Ovary (tissue), 10 donors: ENCODE measurements at regions of chr12 and their contacts with region 1.

Region 1: DNA sequence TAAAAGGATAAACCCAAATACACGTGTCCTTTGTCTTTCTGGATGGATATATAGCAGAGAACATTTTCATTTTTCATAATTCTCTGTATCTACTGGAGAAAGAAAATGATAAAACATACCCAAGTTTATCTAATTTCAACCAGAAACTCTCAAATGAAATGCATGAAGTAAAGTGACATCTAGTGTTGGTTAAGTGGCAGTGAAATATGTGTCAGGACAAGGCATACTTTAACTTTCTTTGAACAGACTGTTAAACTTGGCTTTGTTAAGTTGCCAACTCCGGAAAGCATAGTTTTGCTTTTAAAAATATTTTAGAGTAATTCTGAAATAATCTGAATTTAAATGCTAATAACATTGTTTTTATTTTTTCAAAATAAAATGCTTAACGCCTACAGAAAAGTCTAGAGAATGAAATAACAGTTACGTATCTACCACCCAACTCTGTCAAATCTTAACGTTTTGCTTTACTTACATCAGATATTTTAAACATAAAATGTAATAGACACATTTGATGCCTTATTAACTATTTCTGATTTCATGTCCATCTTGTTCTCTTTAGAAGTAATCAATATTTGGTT is 25.2 kb upstream of the NTN4 start:
- DNase-seq: no peak
- H3K4me3 ChIP-seq: no peak overlapping the region
- H3K27ac ChIP-seq: no peak overlapping the region
- H3K4me1 ChIP-seq: no peaks in the 10 kb centered on the region
- H3K27me3 ChIP-seq: no peaks in the 10 kb centered on the region
- CTCF ChIP-seq: peak; percentile 54 to 88 (median 70)
- EP300 ChIP-seq: no peak
- POLR2A ChIP-seq: no peak

Region 2: DNA sequence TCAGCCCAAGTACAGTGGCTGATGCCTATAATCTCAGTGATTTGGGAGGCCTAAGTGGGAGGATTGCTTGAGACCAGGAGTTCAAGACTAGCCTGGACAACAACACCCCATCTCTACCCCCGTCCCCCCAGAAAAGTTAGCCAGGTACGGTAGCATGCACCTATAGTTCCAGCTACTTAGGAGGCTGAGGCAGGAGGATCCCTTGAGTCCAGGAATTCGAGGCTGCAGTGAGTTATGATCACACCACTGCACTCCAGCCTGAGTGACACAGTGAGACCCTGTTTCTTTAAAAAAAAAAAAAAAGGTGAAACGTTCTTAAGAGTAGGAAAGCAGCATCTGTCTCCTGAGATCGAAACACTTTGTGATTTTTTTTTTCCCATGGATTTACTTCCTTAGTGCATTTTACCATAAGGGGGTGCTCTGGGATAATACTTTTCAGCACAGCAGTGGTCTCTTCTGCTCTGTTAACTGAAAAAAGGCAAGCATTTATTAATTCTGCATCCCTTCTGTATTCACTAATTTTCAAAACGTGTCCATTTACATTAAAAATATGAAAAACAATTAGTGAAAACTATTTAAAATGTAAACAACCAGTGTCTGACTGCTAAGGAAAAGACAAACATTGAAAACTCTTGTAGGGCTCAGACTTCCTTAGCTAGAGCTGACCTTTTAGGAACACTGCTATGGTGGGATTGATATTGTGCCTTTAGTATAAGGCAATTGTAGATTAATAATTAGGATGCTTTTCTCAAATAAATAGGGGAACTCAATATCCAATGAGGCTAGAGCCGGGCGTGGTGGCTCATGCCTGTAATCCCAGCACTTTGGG is 233.3 kb before region 1 on chr12:
- intact Hi-C with region 1: loop called in 3 of 4 experiments (anchors 2 to 5 kb)
- DNase-seq: no peak
- H3K4me3 ChIP-seq: no peak overlapping the region
- H3K27ac ChIP-seq: no peak overlapping the region
- H3K4me1 ChIP-seq: no peaks in the 10 kb centered on the region
- H3K27me3 ChIP-seq: no peaks in the 10 kb centered on the region
- CTCF ChIP-seq: peak; percentile 34 to 65 (median 56)
- EP300 ChIP-seq: no peak
- POLR2A ChIP-seq: no peak

Region 3: GRCh38 chr12:95623585-95624042 is 192.1 kb before region 1 on chr12:
- intact Hi-C with region 1: loop called in 2 of 4 experiments (anchors 5 to 10 kb)
- DNase-seq: peak; percentile 62 to 81 (median 74)
- H3K4me3 ChIP-seq: no peak overlapping the region
- H3K27ac ChIP-seq: no peak overlapping the region
- H3K4me1 ChIP-seq: peaks cover 1% of the 10 kb centered on the region
- H3K27me3 ChIP-seq: no peaks in the 10 kb centered on the region
- CTCF ChIP-seq: peak; percentile 22 to 58 (median 41)
- EP300 ChIP-seq: no peak
- POLR2A ChIP-seq: no peak

Region 4: GRCh38 chr12:95700316-95700785 is 115.4 kb before region 1 on chr12:
- intact Hi-C with region 1: no loop called
- DNase-seq: no peak
- H3K4me3 ChIP-seq: no peak overlapping the region
- H3K27ac ChIP-seq: no peak overlapping the region
- H3K4me1 ChIP-seq: peaks cover 2% of the 10 kb centered on the region
- H3K27me3 ChIP-seq: no peaks in the 10 kb centered on the region
- CTCF ChIP-seq: no peak
- EP300 ChIP-seq: no peak
- POLR2A ChIP-seq: no peak

Region 5: GRCh38 chr12:95763809-95764253 is 51.9 kb before region 1 on chr12:
- intact Hi-C with region 1: no loop called
- DNase-seq: no peak
- H3K4me3 ChIP-seq: no peak overlapping the region
- H3K27ac ChIP-seq: no peak overlapping the region
- H3K4me1 ChIP-seq: peaks cover 4% of the 10 kb centered on the region
- H3K27me3 ChIP-seq: no peaks in the 10 kb centered on the region
- CTCF ChIP-seq: no peak
- EP300 ChIP-seq: no peak
- POLR2A ChIP-seq: no peak